Activated T-helper 1 cell treated with anti-CD3 and anti-CD28 coated beads, Interleukin-12 subunit alpha, Interleukin-12 subunit beta, Interleukin-2, Interleukin-4 antibody, amounts not matched to agents 30 ng/mL and 10 ng/mL and 1 ng/mL, durations not matched to agents 14 hours and 24 hours and 36 hours (primary cell): ENCODE measurements at regions of chr13 and their contacts with region 1.

Region 1: DNA sequence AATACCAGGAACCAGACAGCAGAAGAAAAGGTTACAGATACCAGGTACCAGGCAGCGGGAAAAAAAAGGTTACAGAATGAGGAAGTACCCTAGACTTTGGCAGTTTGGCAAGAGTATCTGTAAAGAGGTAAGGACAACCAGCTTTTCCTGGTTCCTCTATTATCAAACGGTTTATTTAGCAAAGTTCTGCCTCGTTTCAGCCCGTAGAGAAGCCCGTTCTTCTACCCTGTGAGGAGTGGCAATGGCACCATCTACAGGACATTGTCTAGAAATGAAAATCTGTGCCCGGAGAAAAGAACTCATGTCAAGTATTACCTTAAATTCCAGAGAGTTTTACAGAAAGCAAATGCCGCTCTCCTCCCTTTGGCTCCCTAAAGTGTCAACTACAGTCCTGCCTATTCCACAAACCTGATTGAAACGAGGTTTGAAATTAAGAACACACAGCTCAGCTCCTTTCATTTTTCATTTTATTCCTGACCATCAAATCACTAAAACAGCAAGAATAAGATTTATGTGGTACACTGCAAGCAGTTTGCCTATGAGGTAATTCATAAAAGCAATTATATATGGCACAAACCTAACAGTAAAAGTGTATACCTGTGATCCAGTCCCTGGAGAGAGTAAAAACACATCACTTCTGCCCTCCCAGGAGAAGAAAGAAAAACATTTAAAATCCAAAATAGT is 226.3 kb downstream of the SLC7A1 start:
- DNase-seq: no peak
- H3K4me3 Mint-ChIP-seq: no peak overlapping the region
- H3K27ac Mint-ChIP-seq: no peak overlapping the region
- H3K4me1 Mint-ChIP-seq: peaks cover 7% of the 10 kb centered on the region
- H3K27me3 Mint-ChIP-seq: peaks cover 6% of the 10 kb centered on the region

Region 2: DNA sequence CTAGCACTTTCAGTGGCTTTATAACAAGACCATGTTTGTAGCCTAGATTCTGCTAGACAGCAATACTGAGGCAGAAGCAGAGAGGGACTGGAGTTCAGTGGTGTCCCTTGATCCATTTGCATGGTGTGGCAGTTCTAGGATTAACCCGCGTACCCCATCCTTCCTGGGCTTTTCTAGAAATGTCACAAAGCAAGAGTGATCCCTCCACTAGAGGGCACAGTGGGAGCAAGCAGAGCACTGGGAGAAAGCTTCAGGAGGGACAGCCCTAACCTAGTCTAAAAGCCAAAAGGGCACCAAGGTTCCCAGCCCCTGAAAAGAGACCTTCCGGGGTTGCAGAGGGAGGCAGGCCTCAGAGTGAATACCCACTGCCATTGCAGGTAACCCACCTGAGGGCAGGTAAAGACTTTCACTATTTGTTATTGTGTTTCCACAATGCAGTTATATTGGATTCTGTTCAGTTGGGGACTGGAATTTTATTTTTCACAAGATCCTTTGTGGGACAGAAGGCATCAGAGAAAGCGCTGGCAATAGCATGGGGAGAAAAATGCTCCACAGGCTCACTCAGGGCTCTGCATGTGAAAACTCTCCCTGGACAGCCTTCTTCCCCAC is 1044.9 kb before region 1 on chr13:
- intact Hi-C with region 1: loop called (anchors 5 kb)
- DNase-seq: peak; percentile 36
- H3K4me3 Mint-ChIP-seq: no peak overlapping the region
- H3K27ac Mint-ChIP-seq: no peak overlapping the region
- H3K4me1 Mint-ChIP-seq: no peaks in the 10 kb centered on the region
- H3K27me3 Mint-ChIP-seq: peaks cover 3% of the 10 kb centered on the region